RWPE1 (cell line): ENCODE measurements at regions of chr15 and their contacts with region 1.

Region 1: GRCh38 chr15:35444557-35445204 is 101.3 kb downstream of the DPH6 start:
- DNase-seq: peak; percentile 26
- H3K27ac ChIP-seq: no peak overlapping the region
- CTCF ChIP-seq: peak; percentile 91

Region 2: DNA sequence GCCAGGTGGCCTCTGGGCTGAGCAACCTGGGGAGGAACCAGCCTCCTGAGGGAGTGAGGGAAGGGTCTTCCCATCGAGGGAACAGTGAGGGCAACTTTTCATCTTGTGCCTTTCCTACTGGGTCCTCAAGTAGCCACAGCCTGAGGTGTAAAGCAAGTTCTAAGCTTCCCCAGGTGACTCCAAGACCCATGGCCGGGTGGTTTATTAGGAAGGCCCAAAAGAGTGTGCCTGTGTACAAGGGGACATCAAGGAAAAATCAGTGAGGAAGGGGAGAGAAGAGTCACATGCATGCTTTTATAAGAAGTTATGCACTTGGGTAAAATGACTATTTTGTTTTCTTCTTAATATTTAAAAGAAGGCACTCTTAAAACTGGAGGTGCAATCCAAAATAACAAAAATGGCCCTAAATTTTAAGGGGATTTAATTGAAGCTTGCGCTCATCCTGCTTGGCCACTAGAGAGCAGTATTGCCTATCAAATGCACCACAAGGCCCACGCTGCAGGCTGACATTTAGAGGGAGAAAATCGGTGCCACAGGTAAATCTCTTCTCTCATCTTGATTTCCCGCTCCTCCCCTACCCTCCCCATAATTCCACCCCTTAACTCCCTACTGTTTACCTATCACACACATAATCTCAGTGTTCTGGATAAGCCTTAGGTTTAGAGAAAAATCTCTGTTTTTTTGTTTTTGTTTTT is 366.3 kb before region 1 on chr15:
- CTCF ChIA-PET with region 1: interaction called, 13 read pairs
- POLR2A ChIA-PET with region 1: no interaction called
- DNase-seq: peak; percentile 71
- H3K27ac ChIP-seq: no peak overlapping the region
- CTCF ChIP-seq: peak; percentile 88

Region 3: DNA sequence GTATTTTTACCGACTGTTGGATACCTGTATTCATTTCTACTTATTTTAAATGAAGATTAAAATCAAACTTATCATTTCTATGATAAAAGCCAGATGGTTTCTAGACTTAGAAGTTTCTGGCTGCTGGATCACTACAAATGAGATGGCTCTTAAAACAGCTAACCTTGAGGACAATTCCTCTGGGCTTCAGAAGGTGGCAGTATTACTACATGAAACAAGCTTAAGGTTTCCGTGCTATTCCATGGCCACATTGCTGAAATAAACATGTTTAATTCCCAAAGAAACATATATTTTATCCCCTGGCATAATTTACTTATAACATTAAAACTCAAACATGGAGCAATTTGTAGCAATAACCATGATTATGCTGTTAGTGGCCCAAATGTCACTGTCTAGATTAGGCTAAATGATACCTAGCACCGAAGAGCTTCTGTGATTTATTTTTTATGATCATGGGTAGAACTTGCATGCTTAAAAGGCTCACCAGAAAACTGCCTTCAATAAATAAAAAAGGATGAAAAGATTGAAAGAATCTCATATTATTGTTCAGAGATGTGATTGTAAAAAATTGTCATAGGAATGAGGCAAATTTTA is 155.6 kb before region 1 on chr15:
- CTCF ChIA-PET with region 1: interaction called, 59 read pairs
- POLR2A ChIA-PET with region 1: no interaction called
- DNase-seq: peak; percentile 41
- H3K27ac ChIP-seq: no peak overlapping the region
- CTCF ChIP-seq: peak; percentile 87

Region 4: GRCh38 chr15:35319354-35319753 is 125.3 kb before region 1 on chr15:
- CTCF ChIA-PET with region 1: no interaction called
- POLR2A ChIA-PET with region 1: no interaction called
- DNase-seq: no peak
- H3K27ac ChIP-seq: peak overlapping the region; percentile 55
- CTCF ChIP-seq: no peak

Region 5: DNA sequence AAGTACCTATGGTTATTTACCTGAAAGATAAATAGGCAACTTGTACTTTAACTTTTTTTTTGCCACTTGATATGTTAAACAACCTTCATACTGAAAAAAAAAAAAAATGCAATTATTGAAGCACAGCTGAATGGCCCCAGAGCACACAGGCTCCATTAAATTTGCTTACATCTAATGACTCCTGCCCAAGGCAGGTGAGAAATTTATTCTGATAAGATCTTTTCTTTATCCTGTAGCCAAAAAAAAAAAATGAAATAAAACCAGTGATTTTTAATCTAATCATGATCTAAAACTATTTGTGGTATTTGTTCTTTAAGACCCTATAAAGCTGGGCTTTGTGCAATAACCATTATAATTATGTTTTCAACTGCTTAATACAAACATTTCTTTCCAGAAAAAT is 14.4 kb before region 1 on chr15:
- CTCF ChIA-PET with region 1: interaction called, 10 read pairs
- POLR2A ChIA-PET with region 1: no interaction called
- DNase-seq: no peak
- H3K27ac ChIP-seq: no peak overlapping the region
- CTCF ChIP-seq: no peak